ENCODE measurements at regions of chr17 and their contacts with region 1.

Region 1: GRCh38 chr17:78019367-78019975 is 61.0 kb downstream of the TNRC6C start:
- DNase-seq: peak; percentile 9
- ATAC-seq: peak; percentile 63
- H3K4me3 ChIP-seq: peak overlapping the region; percentile 25; the same call in 1 of the 2 replicates
- H3K27ac ChIP-seq: peak overlapping the region; percentile 60; the same call in 1 of the 2 replicates
- H3K4me1 ChIP-seq: peaks cover 14% of the 10 kb centered on the region
- H3K27me3 ChIP-seq: no peaks in the 10 kb centered on the region
- CTCF ChIP-seq: peak; percentile 31 to 67 (median 51); a peak in 5 of 6 replicates
- EP300 ChIP-seq: no peak
- POLR2A ChIP-seq: no peak
- RAD21 ChIP-seq: peak; percentile 62

Region 2: DNA sequence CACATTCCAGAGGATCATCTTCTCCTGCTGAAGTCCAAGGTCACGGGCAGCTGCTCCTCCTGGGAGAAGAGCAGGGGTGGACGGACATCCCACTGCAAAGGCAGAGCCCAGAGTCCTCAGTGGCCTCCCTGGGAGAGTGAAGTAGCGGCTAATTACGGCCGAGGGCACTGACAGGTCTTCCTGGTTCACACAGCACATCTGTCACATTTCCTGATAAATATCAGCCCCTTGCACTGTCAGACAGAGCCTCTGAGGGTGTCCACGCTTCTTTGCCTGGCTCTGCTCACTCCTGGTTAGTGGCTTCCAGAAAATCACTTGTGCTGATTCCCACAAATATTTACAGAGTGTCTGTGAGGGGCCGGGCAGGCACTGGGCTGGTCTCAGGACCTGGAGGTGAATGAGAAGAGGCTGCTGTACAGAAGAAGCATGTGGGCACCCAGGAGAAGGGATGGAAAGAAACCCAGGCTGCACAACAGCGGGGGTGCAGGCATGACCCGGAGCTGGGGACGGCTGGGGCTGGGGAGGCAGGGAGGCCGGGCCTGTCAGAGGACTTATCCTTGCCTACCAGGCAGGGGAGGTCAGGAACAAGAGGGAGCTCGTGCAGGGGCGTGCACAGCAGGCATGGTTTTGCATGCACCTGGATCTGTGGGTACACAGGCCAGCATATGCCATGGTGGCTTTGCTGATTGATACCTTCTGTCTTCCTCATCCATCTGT is 319.1 kb before region 1 on chr17:
- CTCF ChIA-PET with region 1: no interaction called
- POLR2A ChIA-PET with region 1: no interaction called
- RAD21 ChIA-PET with region 1: no interaction called
- SMC1A ChIA-PET with region 1: no interaction called
- in situ Hi-C with region 1: no loop called
- intact Hi-C with region 1: no loop called
- DNase-seq: no peak
- ATAC-seq: no peak
- H3K4me3 ChIP-seq: no peak overlapping the region
- H3K27ac ChIP-seq: no peak overlapping the region
- H3K4me1 ChIP-seq: no peaks in the 10 kb centered on the region
- H3K27me3 ChIP-seq: peaks cover 0 to 1% of the 10 kb centered on the region in 2 experiments; a peak in 3 of 4 replicates
- CTCF ChIP-seq: no peak
- EP300 ChIP-seq: no peak
- POLR2A ChIP-seq: no peak
- RAD21 ChIP-seq: no peak

Region 3: GRCh38 chr17:77772461-77772897 is 247.0 kb before region 1 on chr17:
- CTCF ChIA-PET with region 1: interaction called, 111 read pairs
- POLR2A ChIA-PET with region 1: no interaction called
- RAD21 ChIA-PET with region 1: interaction called, 10 read pairs
- SMC1A ChIA-PET with region 1: interaction called, 25 read pairs
- in situ Hi-C with region 1: loop called (anchors 5 kb)
- intact Hi-C with region 1: loop called (anchors 1 kb)
- DNase-seq: no peak
- ATAC-seq: peak; percentile 99
- H3K4me3 ChIP-seq: no peak overlapping the region
- H3K27ac ChIP-seq: no peak overlapping the region
- H3K4me1 ChIP-seq: no peaks in the 10 kb centered on the region
- H3K27me3 ChIP-seq: no peaks in the 10 kb centered on the region
- CTCF ChIP-seq: peak; percentile 79 to 96 (median 92)
- EP300 ChIP-seq: no peak
- POLR2A ChIP-seq: no peak
- RAD21 ChIP-seq: peak; percentile 78

Region 4: DNA sequence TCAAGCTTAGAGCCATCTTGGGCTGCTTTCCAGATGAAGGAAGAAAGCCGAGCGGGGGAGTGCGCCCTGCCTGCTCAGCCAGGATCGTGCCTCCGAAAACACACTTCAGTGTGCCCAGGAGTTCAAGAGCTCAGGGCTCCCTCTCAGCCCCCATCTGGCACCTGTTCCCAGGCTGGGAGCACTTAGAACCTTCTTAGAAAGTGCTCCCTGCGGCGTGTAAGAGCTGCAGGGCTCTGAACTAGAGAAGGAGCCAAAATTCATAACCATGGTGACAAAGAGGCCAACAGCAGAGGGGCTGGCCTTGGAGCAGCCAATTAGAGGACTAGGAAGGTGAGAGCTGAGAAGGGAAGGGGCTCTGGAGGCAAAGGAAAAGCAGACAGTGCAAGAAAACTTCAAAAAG is 120.0 kb before region 1 on chr17:
- CTCF ChIA-PET with region 1: no interaction called
- POLR2A ChIA-PET with region 1: no interaction called
- RAD21 ChIA-PET with region 1: no interaction called
- SMC1A ChIA-PET with region 1: no interaction called
- in situ Hi-C with region 1: no loop called
- intact Hi-C with region 1: no loop called
- DNase-seq: no peak
- ATAC-seq: no peak
- H3K4me3 ChIP-seq: no peak overlapping the region
- H3K27ac ChIP-seq: no peak overlapping the region
- H3K4me1 ChIP-seq: no peaks in the 10 kb centered on the region
- H3K27me3 ChIP-seq: no peaks in the 10 kb centered on the region; a peak in 2 of 4 replicates
- CTCF ChIP-seq: no peak
- EP300 ChIP-seq: no peak
- POLR2A ChIP-seq: no peak
- RAD21 ChIP-seq: no peak

Region 5: DNA sequence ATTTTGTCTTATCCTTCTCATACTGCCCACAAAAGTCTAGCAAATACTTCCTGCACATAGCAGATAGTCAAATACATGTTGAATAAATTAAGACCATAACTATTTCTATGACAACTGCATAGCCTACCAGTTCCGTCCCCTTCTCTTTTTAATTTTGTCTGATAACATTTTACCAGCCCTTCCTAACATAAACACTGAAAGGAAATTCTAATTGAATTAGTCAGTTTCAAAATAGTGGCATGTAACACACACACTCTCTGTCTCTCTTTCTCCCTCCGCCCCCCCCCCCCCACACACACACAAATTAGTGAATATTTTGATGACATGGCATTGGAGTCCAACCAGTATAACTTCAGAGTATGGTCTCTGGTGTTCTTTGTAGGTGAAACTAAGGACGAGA is 19.1 kb before region 1 on chr17:
- CTCF ChIA-PET with region 1: interaction called, 25 read pairs
- POLR2A ChIA-PET with region 1: no interaction called
- RAD21 ChIA-PET with region 1: interaction called, 8 read pairs
- SMC1A ChIA-PET with region 1: interaction called, 35 read pairs
- in situ Hi-C with region 1: no loop called
- intact Hi-C with region 1: no loop called
- DNase-seq: no peak
- ATAC-seq: no peak
- H3K4me3 ChIP-seq: no peak overlapping the region
- H3K27ac ChIP-seq: no peak overlapping the region
- H3K4me1 ChIP-seq: no peaks in the 10 kb centered on the region
- H3K27me3 ChIP-seq: no peaks in the 10 kb centered on the region
- CTCF ChIP-seq: no peak
- EP300 ChIP-seq: no peak
- POLR2A ChIP-seq: no peak
- RAD21 ChIP-seq: no peak

Region 6: DNA sequence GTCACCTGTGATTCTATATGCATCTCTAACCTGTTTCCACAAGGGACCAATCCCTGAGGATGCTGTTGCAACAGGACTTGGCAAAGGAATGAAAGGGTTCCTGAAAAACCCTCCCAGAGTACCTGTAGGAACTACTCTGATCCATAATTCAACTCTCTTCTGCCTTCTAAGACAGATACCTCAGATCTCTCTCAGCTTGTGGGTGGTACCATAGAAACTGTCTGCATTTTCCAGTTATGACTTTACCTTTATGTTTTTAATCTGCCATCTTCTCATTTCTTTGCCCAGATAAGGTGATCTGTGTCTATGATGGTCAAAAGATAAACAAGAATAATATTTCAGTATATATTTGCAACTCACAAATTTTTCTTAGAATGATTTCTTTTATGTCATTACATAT is 44.0 kb after region 1 on chr17:
- CTCF ChIA-PET with region 1: interaction called, 20 read pairs
- POLR2A ChIA-PET with region 1: no interaction called
- RAD21 ChIA-PET with region 1: interaction called, 5 read pairs
- SMC1A ChIA-PET with region 1: interaction called, 14 read pairs
- in situ Hi-C with region 1: no loop called
- intact Hi-C with region 1: no loop called
- DNase-seq: no peak
- ATAC-seq: no peak
- H3K4me3 ChIP-seq: no peak overlapping the region
- H3K27ac ChIP-seq: no peak overlapping the region
- H3K4me1 ChIP-seq: no peaks in the 10 kb centered on the region
- H3K27me3 ChIP-seq: no peaks in the 10 kb centered on the region
- CTCF ChIP-seq: no peak
- EP300 ChIP-seq: no peak
- POLR2A ChIP-seq: no peak
- RAD21 ChIP-seq: no peak

Region 7: GRCh38 chr17:78112518-78113226 is 93.2 kb after region 1 on chr17:
- CTCF ChIA-PET with region 1: interaction called, 5 read pairs
- POLR2A ChIA-PET with region 1: interaction called, 9 read pairs
- RAD21 ChIA-PET with region 1: interaction called, 14 read pairs
- SMC1A ChIA-PET with region 1: interaction called, 6 read pairs
- in situ Hi-C with region 1: no loop called
- intact Hi-C with region 1: no loop called
- DNase-seq: no peak
- ATAC-seq: peak; percentile 84
- H3K4me3 ChIP-seq: no peak overlapping the region
- H3K27ac ChIP-seq: no peak overlapping the region; the same call in 1 of the 2 replicates
- H3K4me1 ChIP-seq: peaks cover 27% of the 10 kb centered on the region
- H3K27me3 ChIP-seq: no peaks in the 10 kb centered on the region
- CTCF ChIP-seq: peak; percentile 93 to 99 (median 96); a peak in 5 of 6 replicates
- EP300 ChIP-seq: no peak
- POLR2A ChIP-seq: peak; percentile 77
- RAD21 ChIP-seq: peak; percentile 96

Region 8: GRCh38 chr17:78186692-78187595 is 167.5 kb after region 1 on chr17 and contains the starts of genes AFMID and TK1:
- CTCF ChIA-PET with region 1: interaction called, 7 read pairs
- POLR2A ChIA-PET with region 1: interaction called, 3 read pairs
- RAD21 ChIA-PET with region 1: interaction called, 10 read pairs
- SMC1A ChIA-PET with region 1: interaction called, 7 read pairs
- in situ Hi-C with region 1: no loop called
- intact Hi-C with region 1: no loop called
- DNase-seq: peak; percentile 87
- ATAC-seq: peak; percentile 95
- H3K4me3 ChIP-seq: peak within 1 kb of the TSS; percentile 96
- H3K27ac ChIP-seq: peak within 1 kb of the TSS; percentile 71
- H3K4me1 ChIP-seq: peaks cover 5% of the 10 kb centered on the region; the same call in 1 of the 2 replicates
- H3K27me3 ChIP-seq: no peaks in the 10 kb centered on the region
- CTCF ChIP-seq: peak; percentile 27 to 56 (median 37); a peak in 3 of 6 replicates
- EP300 ChIP-seq: no peak
- POLR2A ChIP-seq: peak; percentile 94
- RAD21 ChIP-seq: no peak
- polyA plus RNA-seq, gene AFMID: 50.3 to 98.8 TPM
- polyA plus RNA-seq, gene TK1: 4.6 to 13.0 TPM